ENCODE measurements at regions of chr3 and their contacts with region 1.

Region 1: DNA sequence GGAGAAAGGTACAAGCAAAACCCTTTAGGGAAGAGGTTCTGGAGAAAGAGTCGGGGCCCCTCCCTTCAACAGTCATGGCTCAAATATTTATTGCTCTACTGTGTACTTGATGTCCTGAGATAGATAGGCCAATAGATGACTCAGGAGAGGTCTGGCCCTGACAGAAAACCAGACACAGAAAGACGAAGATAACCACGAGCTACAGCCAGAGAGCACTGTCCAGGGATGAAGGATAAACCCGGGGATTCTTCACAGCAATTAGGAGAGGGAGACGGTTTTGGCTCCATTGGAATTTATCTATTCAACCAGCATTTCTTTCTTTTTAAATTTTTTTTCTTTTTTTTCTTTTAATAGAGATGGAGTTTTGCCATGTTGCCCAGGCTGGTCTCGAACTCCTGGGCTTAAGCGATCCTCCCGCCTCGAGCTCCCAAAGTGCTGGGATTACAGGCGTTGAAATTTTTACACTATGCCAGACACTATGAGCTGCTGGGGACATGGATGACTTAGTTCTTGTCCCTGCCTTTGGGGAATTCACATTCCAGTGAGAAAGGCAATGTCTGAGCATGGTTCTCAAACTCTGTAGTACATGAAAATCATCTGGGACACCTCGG is 4.6 kb upstream of the CIDEC start:
- DNase-seq: peak; percentile 62 to 88
- H3K4me3 ChIP-seq: no peak overlapping the region
- H3K27ac ChIP-seq: peak overlapping the region; percentile 93
- H3K4me1 ChIP-seq: peaks cover 29% of the 10 kb centered on the region
- H3K27me3 ChIP-seq: no peaks in the 10 kb centered on the region
- CTCF ChIP-seq: no peak

Region 2: GRCh38 chr3:9843715-9844438 is 40.8 kb before region 1 on chr3 and contains the start of gene RPUSD3:
- CTCF ChIA-PET with region 1: no interaction called
- POLR2A ChIA-PET with region 1: no interaction called
- intact Hi-C with region 1: loop called (anchors 2 kb)
- DNase-seq: peak; percentile 79 to 97
- H3K4me3 ChIP-seq: peak within 1 kb of the TSS; percentile 66
- H3K27ac ChIP-seq: peak within 1 kb of the TSS; percentile 16; the same call in 1 of the 2 replicates
- H3K4me1 ChIP-seq: peaks cover 20% of the 10 kb centered on the region
- H3K27me3 ChIP-seq: no peaks in the 10 kb centered on the region
- CTCF ChIP-seq: no peak
- total RNA-seq, gene RPUSD3: 53.2 and 57.7 TPM in 2 replicates

Region 3: DNA sequence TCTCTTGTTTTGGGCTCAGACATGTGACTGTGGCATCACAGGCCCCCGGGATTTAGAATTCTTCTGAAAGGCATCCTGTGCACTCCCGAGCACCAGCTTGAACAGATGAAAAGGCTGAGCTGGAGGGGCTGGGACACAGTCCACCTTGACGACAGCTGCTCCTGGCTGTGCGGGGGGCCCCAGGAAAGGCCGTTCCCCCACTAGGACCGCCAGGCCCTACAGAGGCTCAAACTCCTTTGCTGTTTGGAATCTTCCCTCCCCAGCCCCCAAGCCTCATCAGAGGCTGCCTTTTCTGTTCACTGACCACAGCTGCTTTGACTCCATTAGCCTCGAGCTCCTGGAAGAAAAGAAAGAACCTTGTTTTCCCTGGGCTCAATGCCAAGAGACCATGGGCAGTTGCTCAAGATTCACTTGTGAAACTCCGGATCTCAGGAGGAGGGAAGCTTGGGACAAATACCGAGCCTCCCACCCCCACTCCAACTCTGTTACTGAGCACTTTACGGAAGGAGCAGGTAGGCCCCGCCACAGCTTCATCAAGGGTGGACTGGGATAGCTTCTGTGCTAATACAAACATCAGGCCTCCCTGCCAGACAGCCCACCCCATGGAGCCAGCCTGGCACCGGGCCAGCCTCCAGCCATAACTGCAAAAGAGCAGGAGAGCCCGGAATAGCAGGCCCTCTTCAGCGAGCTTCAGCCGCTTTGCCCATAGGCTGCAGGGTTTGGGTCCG is 20.3 kb before region 1 on chr3:
- CTCF ChIA-PET with region 1: interaction called, 19 read pairs
- POLR2A ChIA-PET with region 1: no interaction called
- intact Hi-C with region 1: no loop called
- DNase-seq: peak; percentile 50 to 80
- H3K4me3 ChIP-seq: peak overlapping the region; percentile 39; the same call in 1 of the 2 replicates
- H3K27ac ChIP-seq: peak overlapping the region; percentile 64
- H3K4me1 ChIP-seq: peaks cover 43% of the 10 kb centered on the region
- H3K27me3 ChIP-seq: no peaks in the 10 kb centered on the region
- CTCF ChIP-seq: no peak

Region 4: GRCh38 chr3:10140996-10141546 is 256.4 kb after region 1 on chr3:
- CTCF ChIA-PET with region 1: no interaction called
- POLR2A ChIA-PET with region 1: no interaction called
- intact Hi-C with region 1: no loop called
- DNase-seq: no peak
- H3K4me3 ChIP-seq: peak overlapping the region; percentile 100; the same call in 1 of the 2 replicates
- H3K27ac ChIP-seq: no peak overlapping the region
- H3K4me1 ChIP-seq: peaks cover 32% of the 10 kb centered on the region
- H3K27me3 ChIP-seq: no peaks in the 10 kb centered on the region
- CTCF ChIP-seq: no peak